ENCODE measurements at regions of chr6 and their contacts with region 1.

Region 1: GRCh38 chr6:90025523-90026061 is 131.3 kb downstream of the GJA10 start:
- DNase-seq: no peak
- H3K4me3 Mint-ChIP-seq: peak overlapping the region; percentile 72
- H3K27ac Mint-ChIP-seq: peak overlapping the region; percentile 92
- H3K4me1 Mint-ChIP-seq: peaks cover 71% of the 10 kb centered on the region
- H3K27me3 Mint-ChIP-seq: no peaks in the 10 kb centered on the region

Region 2: DNA sequence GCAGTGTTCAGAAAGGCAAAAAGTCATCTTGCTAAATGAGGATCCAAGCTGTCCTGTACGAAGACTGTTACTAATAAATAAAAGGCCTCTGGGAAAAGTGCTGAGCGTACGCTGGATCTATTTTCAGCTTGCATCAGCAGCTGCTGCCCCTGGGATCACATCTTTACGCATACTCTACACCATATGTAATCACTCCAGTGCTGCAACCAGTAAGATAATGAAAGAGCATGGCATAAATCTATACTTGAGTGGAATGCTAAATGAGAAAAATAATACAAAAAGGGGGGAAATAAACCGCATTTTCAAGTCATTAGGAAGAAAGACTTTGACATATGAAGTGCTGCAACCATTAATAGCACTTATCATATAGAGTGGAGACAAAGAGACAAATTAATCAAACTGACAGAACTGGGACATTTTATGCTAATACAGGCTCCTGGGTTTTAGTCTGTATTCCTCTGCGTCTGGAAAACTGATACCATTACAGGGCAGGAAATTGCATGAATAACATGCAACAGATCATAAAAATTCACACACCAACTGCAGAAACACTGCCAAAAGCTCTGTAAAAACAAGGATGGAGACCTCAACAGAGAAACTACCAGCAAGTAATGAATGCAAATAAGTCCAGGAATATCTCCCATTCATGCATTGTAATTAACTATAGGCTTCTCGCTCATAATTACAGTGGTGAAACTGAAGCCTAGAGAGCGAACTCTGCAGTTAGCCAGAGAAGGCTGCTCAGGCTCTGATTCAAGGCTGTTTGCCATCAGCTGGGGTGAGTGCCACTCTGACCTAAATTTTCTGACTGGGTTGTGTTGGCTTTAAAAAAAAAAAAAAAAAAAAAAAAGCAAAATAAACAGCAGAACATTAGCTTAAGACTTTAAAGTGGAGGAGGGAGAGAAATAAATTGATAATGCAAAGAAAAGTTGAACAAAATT is 47.5 kb before region 1 on chr6:
- intact Hi-C with region 1: loop called (anchors 2 kb)
- DNase-seq: no peak
- H3K4me3 Mint-ChIP-seq: no peak overlapping the region
- H3K27ac Mint-ChIP-seq: no peak overlapping the region
- H3K4me1 Mint-ChIP-seq: peaks cover 21% of the 10 kb centered on the region
- H3K27me3 Mint-ChIP-seq: no peaks in the 10 kb centered on the region

Region 3: DNA sequence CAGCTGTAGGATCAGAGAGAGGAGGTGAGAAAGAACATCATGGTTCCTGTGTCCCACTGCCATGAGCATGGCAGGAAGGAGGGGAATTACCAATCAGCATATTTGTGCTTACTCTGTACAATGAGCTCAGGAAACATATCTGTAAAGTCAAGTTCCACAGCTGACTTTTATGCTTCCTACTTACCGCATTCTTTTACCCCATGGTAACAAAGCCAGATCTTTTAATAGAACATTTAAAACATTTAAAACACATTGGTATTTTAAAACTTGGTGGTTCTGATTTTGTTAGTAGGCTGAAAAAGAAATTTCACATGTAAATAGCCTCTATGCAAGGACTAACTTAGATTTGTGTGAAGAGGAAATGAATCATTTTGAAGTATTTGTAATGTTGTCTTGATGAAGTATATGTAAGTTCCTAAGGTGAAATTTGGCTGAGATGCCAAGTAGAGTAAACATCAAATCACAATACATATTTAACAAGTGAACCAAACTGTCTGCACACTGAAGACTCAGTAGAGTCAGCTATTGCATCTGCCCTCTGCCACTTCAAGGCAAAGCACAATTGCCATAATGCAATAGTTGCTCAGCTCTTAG is 16.6 kb before region 1 on chr6:
- intact Hi-C with region 1: loop called (anchors 1 kb)
- DNase-seq: no peak
- H3K4me3 Mint-ChIP-seq: no peak overlapping the region
- H3K27ac Mint-ChIP-seq: peak overlapping the region; percentile 62
- H3K4me1 Mint-ChIP-seq: peaks cover 30% of the 10 kb centered on the region
- H3K27me3 Mint-ChIP-seq: no peaks in the 10 kb centered on the region